Right ventricle myocardium superior (tissue), 1 donor: ENCODE measurements at regions of chr1 and their contacts with region 1.

Region 1: GRCh38 chr1:34113887-34114286 is 51.1 kb downstream of the CSMD2 start:
- DNase-seq: no peak
- ATAC-seq: no peak

Region 2: GRCh38 chr1:33633019-33633801 is 480.7 kb before region 1 on chr1:
- intact Hi-C with region 1: loop called (anchors 10 kb)
- DNase-seq: peak; percentile 89
- ATAC-seq: peak; percentile 92

Region 3: GRCh38 chr1:33735621-33736020 is 378.3 kb before region 1 on chr1:
- intact Hi-C with region 1: loop called (anchors 10 kb)
- DNase-seq: no peak
- ATAC-seq: no peak

Region 4: GRCh38 chr1:33876970-33877650 is 236.8 kb before region 1 on chr1:
- intact Hi-C with region 1: loop called (anchors 5 kb)
- DNase-seq: no peak
- ATAC-seq: peak; percentile 56

Region 5: DNA sequence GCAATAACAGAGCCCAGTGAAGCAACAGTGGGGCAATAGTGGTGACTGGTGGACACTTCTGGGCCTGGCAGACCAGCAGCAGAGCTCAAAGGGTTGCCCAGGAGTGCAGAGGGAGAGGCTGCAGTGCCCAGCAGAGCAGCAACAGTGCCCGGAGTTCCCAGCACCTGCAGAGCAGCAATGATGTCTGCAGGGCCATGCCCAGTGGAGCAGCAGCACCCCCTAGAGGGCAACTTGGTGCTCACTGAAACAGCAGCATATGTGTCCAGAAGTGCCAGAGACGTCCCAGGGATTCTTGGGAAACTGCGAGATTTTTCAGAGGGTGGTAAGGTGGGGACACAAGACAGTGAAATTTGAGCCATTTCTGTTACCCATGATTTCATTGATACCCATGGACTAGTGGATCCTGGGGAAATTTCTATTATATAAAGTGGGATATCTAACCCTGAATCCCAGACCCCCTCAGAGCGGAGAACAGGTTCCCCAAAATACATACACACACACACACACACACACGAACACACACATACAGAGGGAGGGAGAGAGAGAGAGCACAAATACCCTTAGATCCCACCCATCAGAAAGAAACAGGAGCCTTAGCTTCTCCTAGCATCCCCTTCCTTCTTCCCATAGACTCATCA is 484.1 kb after region 1 on chr1:
- intact Hi-C with region 1: loop called (anchors 5 kb)
- DNase-seq: peak; percentile 57
- ATAC-seq: peak; percentile 69

Region 6: DNA sequence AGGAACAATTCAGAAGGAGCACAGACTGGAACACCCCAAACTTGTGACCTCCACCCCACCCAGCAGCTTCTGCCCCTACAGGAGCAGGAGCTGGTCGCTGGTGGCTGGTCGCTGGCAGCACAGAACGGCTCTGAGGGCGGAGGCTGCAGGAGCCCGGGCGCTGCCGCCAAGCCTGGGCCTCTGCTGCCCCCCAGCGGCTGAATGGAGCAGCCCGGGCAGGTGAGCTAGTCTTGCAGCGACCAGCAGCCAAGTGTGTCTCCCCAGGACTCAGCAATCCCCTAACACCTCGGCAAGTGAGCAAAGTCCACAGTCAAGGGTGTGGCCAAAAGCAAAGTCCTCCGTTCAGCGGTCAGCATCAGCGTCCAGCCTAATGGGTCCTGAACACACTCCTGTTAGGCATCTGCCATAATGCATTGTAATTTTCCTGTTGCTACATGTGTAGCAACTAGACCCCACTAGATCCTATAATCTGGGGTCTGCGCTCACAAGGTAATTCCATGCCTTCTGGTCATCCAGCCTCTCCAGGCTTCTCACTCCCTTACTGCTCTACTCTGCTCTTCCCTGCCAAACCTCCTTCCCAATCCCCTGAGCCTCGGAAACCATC is 628.9 kb after region 1 on chr1:
- intact Hi-C with region 1: loop called (anchors 10 kb)
- DNase-seq: peak; percentile 85
- ATAC-seq: peak; percentile 95